PC-9 (cell line): ENCODE measurements at regions of chr6 and their contacts with region 1.

Region 1: DNA sequence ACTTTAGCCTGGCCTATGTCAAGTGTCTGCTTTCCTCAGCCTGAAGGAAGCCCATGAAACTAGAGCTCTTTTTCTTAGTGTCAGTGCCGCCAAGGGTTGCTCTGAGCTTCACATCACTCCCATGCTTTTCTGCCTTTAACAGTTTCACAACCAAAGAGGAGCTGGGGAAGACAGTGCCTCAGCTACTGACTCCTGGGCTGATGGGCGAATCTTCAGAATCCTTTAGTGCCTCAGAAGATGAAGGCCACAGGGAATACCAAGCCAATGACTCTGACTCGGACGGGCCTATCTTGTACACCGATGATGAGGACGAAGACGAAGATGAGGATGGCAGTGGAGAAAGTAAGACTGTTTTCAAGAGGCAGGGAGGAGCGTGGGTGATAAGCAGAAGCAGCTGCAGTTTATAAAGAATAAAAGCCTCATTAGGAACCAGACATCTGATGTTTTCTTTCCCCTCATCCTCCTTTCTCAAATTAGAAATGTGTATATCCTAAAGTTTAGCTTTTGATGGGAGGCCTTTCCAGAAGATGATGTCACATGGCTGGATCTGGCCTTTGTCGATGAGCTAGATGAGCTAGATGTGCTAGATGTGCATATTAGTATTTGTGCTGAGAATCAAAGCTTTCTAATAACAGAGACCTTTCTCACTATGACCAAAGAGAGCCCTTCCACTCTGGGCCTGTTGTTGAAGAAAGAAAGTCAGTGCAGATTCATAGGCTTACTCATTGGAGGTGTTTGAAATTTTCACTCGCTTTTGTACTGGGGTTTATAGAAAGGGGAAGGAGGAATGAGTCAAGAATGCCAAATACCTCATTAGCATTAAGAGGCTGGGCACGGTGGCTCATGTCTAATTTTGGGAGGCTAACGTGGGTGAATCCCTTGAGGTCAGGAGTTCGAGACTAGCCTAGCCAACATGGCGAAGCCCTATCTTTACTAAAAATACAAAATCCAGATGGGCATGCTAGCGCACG is 70.7 kb upstream of the LTV1 start:
- DNase-seq: no peak
- H3K4me3 ChIP-seq: no peak overlapping the region
- H3K27ac ChIP-seq: no peak overlapping the region
- H3K4me1 ChIP-seq: no peaks in the 10 kb centered on the region
- H3K27me3 ChIP-seq: no peaks in the 10 kb centered on the region
- CTCF ChIP-seq: no peak

Region 2: GRCh38 chr6:143647191-143647590 is 125.2 kb before region 1 on chr6:
- CTCF ChIA-PET with region 1: no interaction called
- POLR2A ChIA-PET with region 1: interaction called, 11 read pairs
- intact Hi-C with region 1: no loop called
- DNase-seq: no peak
- H3K4me3 ChIP-seq: no peak overlapping the region
- H3K27ac ChIP-seq: no peak overlapping the region
- H3K4me1 ChIP-seq: no peaks in the 10 kb centered on the region
- H3K27me3 ChIP-seq: no peaks in the 10 kb centered on the region
- CTCF ChIP-seq: no peak